ENCODE measurements at regions of chr1 and their contacts with region 1.

Region 1: DNA sequence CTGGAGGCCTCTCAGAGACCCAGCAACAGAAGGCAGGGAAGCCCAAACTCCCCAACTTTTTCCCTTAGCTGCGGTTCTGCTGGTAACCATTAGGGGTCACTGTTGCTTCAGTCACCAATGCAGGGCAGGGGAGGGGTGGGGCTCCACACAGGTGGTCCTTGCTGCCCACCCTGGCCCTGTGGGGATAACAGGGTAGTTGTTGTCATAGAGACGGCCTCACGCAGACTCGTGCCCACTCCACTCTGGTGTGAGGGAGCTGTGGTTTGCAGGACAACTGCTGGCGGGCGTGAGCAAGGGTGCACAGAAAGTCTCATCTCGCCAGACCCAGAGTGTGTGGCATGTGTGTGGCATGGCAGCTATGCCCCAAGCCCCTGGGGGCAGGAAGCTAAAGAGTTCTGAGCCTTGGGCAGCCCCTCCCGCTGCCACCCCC is 19.9 kb downstream of the INSRR start:
- DNase-seq: peak; percentile 57
- H3K4me3 Mint-ChIP-seq: no peak overlapping the region
- H3K27ac Mint-ChIP-seq: no peak overlapping the region
- H3K4me1 Mint-ChIP-seq: peaks cover 41% of the 10 kb centered on the region
- H3K27me3 Mint-ChIP-seq: peaks cover 44% of the 10 kb centered on the region

Region 2: DNA sequence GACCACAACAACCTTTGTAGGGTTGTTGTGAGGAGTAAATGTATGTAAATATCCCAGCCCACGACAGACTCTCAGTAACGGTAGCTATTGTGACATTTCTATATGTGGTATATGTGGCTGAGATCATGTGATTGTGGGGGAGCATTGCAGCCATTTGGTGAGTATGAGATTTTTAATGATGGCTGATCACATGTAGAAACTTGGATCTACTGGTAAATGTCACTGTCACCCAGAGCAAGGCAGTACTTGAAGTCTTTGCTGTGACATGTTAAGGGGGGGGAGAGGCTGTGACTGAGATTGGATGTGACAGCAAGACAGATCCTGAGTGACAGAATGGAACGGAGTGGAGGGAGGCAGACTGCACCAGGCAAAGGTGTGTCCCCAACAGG is 314.5 kb before region 1 on chr1:
- CTCF ChIA-PET with region 1: no interaction called
- POLR2A ChIA-PET with region 1: no interaction called
- DNase-seq: no peak
- H3K4me3 Mint-ChIP-seq: no peak overlapping the region
- H3K27ac Mint-ChIP-seq: peak overlapping the region; percentile 38
- H3K4me1 Mint-ChIP-seq: peaks cover 35% of the 10 kb centered on the region
- H3K27me3 Mint-ChIP-seq: peaks cover 3% of the 10 kb centered on the region

Region 3: GRCh38 chr1:156797212-156797871 is 41.7 kb before region 1 on chr1:
- CTCF ChIA-PET with region 1: interaction called, 20 read pairs
- POLR2A ChIA-PET with region 1: interaction called, 3 read pairs
- DNase-seq: peak; percentile 70
- H3K4me3 Mint-ChIP-seq: no peak overlapping the region
- H3K27ac Mint-ChIP-seq: no peak overlapping the region
- H3K4me1 Mint-ChIP-seq: peaks cover 24% of the 10 kb centered on the region
- H3K27me3 Mint-ChIP-seq: no peaks in the 10 kb centered on the region

Region 4: DNA sequence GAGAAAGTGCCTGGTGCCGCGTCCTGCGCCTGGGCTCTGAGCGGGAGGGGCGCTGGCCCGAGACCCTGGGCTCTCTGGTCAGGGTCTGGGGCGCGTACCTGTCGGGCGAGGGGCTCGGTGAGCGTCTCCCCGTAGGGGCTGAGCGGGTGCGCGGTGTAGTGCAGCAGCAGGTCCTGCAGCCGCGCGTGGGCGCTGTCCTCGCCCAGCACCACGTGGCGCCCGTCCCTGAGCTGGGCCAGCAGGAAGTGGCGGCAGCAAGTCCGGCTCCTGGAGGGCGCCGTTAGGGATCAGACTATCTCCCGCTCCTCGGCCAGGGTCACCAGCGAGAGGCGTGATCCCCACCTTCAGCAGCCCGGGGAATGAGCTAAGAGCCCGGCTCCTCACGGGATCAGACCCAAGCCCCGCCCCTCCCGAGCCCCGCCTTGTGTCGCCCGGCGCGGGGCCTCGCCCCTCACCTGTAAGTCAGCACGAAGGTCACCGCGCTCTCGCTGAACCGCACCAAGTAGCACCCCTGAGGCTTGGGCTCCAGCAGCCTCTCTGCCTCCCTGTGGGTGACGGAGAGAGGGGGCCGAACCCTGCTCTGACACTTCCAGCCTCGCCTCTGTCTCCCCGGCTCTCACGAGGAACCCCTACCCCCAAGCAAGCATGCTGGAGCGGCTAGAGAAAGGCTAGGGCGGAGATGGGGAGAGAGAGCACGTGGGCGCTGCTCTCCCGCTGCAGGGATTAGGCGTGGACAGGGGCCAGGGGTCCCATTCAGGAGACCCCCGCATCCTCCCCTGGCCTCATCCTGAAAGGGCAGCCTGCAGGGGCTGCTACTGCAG is 25.0 kb before region 1 on chr1:
- CTCF ChIA-PET with region 1: interaction called, 24 read pairs
- POLR2A ChIA-PET with region 1: interaction called, 8 read pairs
- DNase-seq: peak; percentile 75
- H3K4me3 Mint-ChIP-seq: peak overlapping the region; percentile 96
- H3K27ac Mint-ChIP-seq: peak overlapping the region; percentile 100
- H3K4me1 Mint-ChIP-seq: peaks cover 79% of the 10 kb centered on the region
- H3K27me3 Mint-ChIP-seq: no peaks in the 10 kb centered on the region

Region 5: DNA sequence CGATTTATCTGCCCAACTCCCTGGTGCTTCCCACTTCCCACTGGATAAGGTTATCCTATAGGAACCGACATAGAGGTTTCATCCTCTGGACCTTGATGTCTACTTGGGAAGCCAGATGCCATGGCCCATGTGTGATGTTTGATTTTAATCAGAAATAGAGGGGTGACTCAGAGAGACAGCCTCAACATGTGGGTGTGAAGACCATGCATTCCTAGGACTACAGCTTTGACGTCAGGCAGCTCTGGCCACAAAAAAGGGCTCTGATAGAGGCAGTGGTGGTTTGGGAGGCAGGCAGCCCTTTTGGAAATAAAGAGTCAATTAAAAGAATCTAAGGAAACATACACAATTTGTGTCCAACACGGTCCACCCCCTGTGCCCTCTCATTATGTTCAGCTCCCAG is 17.2 kb before region 1 on chr1:
- CTCF ChIA-PET with region 1: interaction called, 30 read pairs
- POLR2A ChIA-PET with region 1: interaction called, 8 read pairs
- DNase-seq: no peak
- H3K4me3 Mint-ChIP-seq: no peak overlapping the region
- H3K27ac Mint-ChIP-seq: no peak overlapping the region
- H3K4me1 Mint-ChIP-seq: peaks cover 38% of the 10 kb centered on the region
- H3K27me3 Mint-ChIP-seq: peaks cover 12% of the 10 kb centered on the region

Measured in activated CD4-positive, alpha-beta memory T cell treated with anti-CD3 and anti-CD28 coated beads, Interleukin-2, amount 10 ng/mL, durations not matched to agents 7 days and 5 days (primary cell).